ENCODE measurements at regions of chr12 and their contacts with region 1.

Region 1: GRCh38 chr12:57229634-57230380 is at the start of gene SHMT2:
- DNase-seq: peak; percentile 94 to 96
- H3K4me3 ChIP-seq: peak within 1 kb of the TSS; percentile 62
- H3K4me3 Mint-ChIP-seq: peak within 1 kb of the TSS; percentile 100
- H3K27ac Mint-ChIP-seq: peak within 1 kb of the TSS; percentile 100
- H3K4me1 ChIP-seq: peaks cover 4% of the 10 kb centered on the region; the same call in 1 of the 2 replicates
- H3K4me1 Mint-ChIP-seq: peaks cover 14% of the 10 kb centered on the region
- H3K27me3 ChIP-seq: no peaks in the 10 kb centered on the region
- H3K27me3 Mint-ChIP-seq: no peaks in the 10 kb centered on the region
- CTCF ChIP-seq: no peak
- total RNA-seq, gene SHMT2: 387 and 466 TPM in 2 replicates

Region 2: DNA sequence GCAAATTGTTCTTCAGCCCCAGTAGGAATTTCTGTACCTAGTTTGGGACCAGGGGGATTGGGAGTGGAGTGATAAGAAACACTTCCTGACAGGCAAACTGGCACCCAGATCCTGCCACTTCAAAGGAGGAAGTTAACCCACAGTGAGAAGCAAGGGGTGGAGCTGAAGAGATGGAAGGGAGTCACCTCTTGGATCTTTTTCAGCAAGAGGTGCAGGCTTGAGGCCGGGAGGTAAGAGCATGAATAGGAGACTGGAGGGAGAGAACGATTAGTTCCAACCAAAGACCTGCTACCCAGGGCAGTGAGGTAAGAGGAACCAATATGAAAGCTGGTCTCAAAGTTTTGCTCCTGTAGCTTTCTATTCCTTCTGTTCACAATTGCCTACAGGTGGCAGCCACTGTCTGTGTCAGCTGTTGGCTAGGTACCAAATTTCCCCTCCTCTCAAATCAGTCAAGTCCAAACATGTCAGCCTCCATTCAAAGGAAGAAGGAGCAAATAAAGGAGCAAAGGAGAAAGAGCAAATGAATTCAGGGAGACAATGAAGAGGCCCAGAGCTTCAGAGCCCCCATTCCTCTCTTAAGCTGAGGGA is 198.6 kb before region 1 on chr12:
- CTCF ChIA-PET with region 1: no interaction called
- POLR2A ChIA-PET with region 1: no interaction called
- intact Hi-C with region 1: no loop called
- DNase-seq: no peak
- H3K4me3 ChIP-seq: no peak overlapping the region
- H3K4me3 Mint-ChIP-seq: no peak overlapping the region
- H3K27ac Mint-ChIP-seq: no peak overlapping the region
- H3K4me1 ChIP-seq: no peaks in the 10 kb centered on the region
- H3K4me1 Mint-ChIP-seq: peaks cover 8% of the 10 kb centered on the region
- H3K27me3 ChIP-seq: no peaks in the 10 kb centered on the region
- H3K27me3 Mint-ChIP-seq: no peaks in the 10 kb centered on the region
- CTCF ChIP-seq: peak in 1 of 2 experiments; percentile 36

Region 3: GRCh38 chr12:57213058-57213715 is 16.6 kb before region 1 on chr12:
- CTCF ChIA-PET with region 1: interaction called, 27 read pairs
- POLR2A ChIA-PET with region 1: interaction called, 26 read pairs
- intact Hi-C with region 1: loop called (anchors 1 kb)
- DNase-seq: peak; percentile 83 to 90
- H3K4me3 ChIP-seq: no peak overlapping the region
- H3K4me3 Mint-ChIP-seq: no peak overlapping the region
- H3K27ac Mint-ChIP-seq: no peak overlapping the region
- H3K4me1 ChIP-seq: peaks cover 20% of the 10 kb centered on the region
- H3K4me1 Mint-ChIP-seq: peaks cover 28% of the 10 kb centered on the region
- H3K27me3 ChIP-seq: peaks cover 8% of the 10 kb centered on the region
- H3K27me3 Mint-ChIP-seq: peaks cover 14% of the 10 kb centered on the region
- CTCF ChIP-seq: peak; percentile 83 to 94